MCF 10A (cell line): ENCODE measurements at regions of chr9 and their contacts with region 1.

Region 1: GRCh38 chr9:137578518-137579258 is at the start of gene DPH7:
- DNase-seq: peak; percentile 92
- H3K4me3 Mint-ChIP-seq: peak within 1 kb of the TSS; percentile 81
- H3K27ac Mint-ChIP-seq: peak within 1 kb of the TSS; percentile 88
- H3K4me1 Mint-ChIP-seq: peaks cover 8% of the 10 kb centered on the region
- H3K27me3 Mint-ChIP-seq: no peaks in the 10 kb centered on the region
- CTCF ChIP-seq: peak; percentile 87
- total RNA-seq, gene DPH7: 45.7 and 46.4 TPM in 2 replicates

Region 2: GRCh38 chr9:137590462-137591383 is 12.0 kb after region 1 on chr9 and contains the start of gene ZMYND19:
- CTCF ChIA-PET with region 1: interaction called, 34 read pairs
- POLR2A ChIA-PET with region 1: interaction called, 64 read pairs
- intact Hi-C with region 1: no loop called
- DNase-seq: peak; percentile 87
- H3K4me3 Mint-ChIP-seq: peak within 1 kb of the TSS; percentile 79
- H3K27ac Mint-ChIP-seq: peak within 1 kb of the TSS; percentile 70
- H3K4me1 Mint-ChIP-seq: no peaks in the 10 kb centered on the region
- H3K27me3 Mint-ChIP-seq: no peaks in the 10 kb centered on the region
- CTCF ChIP-seq: no peak
- total RNA-seq, gene ZMYND19: 42.9 and 51.9 TPM in 2 replicates

Region 3: GRCh38 chr9:137611623-137612463 is 33.2 kb after region 1 on chr9:
- CTCF ChIA-PET with region 1: interaction called, 5 read pairs
- POLR2A ChIA-PET with region 1: interaction called, 13 read pairs
- intact Hi-C with region 1: loop called (anchors 5 kb)
- DNase-seq: peak; percentile 94
- H3K4me3 Mint-ChIP-seq: peak overlapping the region; percentile 72
- H3K27ac Mint-ChIP-seq: peak overlapping the region; percentile 96
- H3K4me1 Mint-ChIP-seq: peaks cover 32% of the 10 kb centered on the region
- H3K27me3 Mint-ChIP-seq: no peaks in the 10 kb centered on the region
- CTCF ChIP-seq: no peak

Region 4: GRCh38 chr9:137666955-137667670 is 88.4 kb after region 1 on chr9:
- CTCF ChIA-PET with region 1: no interaction called
- POLR2A ChIA-PET with region 1: no interaction called
- intact Hi-C with region 1: no loop called
- DNase-seq: no peak
- H3K4me3 Mint-ChIP-seq: no peak overlapping the region
- H3K27ac Mint-ChIP-seq: no peak overlapping the region
- H3K4me1 Mint-ChIP-seq: peaks cover 28% of the 10 kb centered on the region
- H3K27me3 Mint-ChIP-seq: no peaks in the 10 kb centered on the region
- CTCF ChIP-seq: no peak